HEK293 (cell line): ENCODE measurements at regions of chr6 and their contacts with region 1.

Region 1: GRCh38 chr6:139375232-139376016 is 976 bp upstream of the CITED2 start:
- H3K4me3 ChIP-seq: peak overlapping the region; percentile 79
- H3K27ac ChIP-seq: peak overlapping the region; percentile 94
- H3K4me1 ChIP-seq: peaks cover 16% of the 10 kb centered on the region
- CTCF ChIP-seq: 0 out of 2 replicates have a peak, but pooled peaks have one; percentile 40

Region 2: GRCh38 chr6:139219271-139219729 is 156.1 kb before region 1 on chr6:
- CTCF ChIA-PET with region 1: no interaction called
- POLR2A ChIA-PET with region 1: interaction called, 11 read pairs
- H3K4me3 ChIP-seq: no peak overlapping the region
- H3K27ac ChIP-seq: no peak overlapping the region
- H3K4me1 ChIP-seq: no peaks in the 10 kb centered on the region
- CTCF ChIP-seq: peak; percentile 88

Region 3: DNA sequence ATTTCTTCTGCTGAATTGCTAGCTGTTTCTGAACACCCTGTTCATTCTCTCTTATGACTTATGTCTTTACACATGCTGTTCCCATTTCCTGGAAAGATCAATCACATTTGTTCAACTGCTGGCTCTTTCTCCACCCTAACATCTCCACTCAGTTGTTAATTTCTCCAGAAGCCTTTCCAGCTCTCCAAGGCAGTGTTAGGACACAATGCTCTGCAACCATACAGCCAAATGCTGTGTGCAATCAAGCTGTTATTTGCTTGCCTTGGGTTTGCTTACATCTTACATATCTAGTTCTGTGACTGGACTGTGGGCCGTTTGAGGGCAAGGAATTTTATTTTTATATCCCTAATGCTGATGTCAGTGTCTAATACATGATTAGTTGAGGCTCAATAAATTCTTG is 23.2 kb after region 1 on chr6:
- CTCF ChIA-PET with region 1: interaction called, 4 read pairs
- POLR2A ChIA-PET with region 1: interaction called, 16 read pairs
- H3K4me3 ChIP-seq: no peak overlapping the region
- H3K27ac ChIP-seq: no peak overlapping the region
- H3K4me1 ChIP-seq: no peaks in the 10 kb centered on the region
- CTCF ChIP-seq: no peak

Region 4: GRCh38 chr6:139480356-139480833 is 105.0 kb after region 1 on chr6:
- CTCF ChIA-PET with region 1: no interaction called
- POLR2A ChIA-PET with region 1: interaction called, 12 read pairs
- H3K4me3 ChIP-seq: no peak overlapping the region
- H3K27ac ChIP-seq: no peak overlapping the region
- H3K4me1 ChIP-seq: peaks cover 3% of the 10 kb centered on the region; the same call in 1 of the 2 replicates
- CTCF ChIP-seq: no peak

Region 5: DNA sequence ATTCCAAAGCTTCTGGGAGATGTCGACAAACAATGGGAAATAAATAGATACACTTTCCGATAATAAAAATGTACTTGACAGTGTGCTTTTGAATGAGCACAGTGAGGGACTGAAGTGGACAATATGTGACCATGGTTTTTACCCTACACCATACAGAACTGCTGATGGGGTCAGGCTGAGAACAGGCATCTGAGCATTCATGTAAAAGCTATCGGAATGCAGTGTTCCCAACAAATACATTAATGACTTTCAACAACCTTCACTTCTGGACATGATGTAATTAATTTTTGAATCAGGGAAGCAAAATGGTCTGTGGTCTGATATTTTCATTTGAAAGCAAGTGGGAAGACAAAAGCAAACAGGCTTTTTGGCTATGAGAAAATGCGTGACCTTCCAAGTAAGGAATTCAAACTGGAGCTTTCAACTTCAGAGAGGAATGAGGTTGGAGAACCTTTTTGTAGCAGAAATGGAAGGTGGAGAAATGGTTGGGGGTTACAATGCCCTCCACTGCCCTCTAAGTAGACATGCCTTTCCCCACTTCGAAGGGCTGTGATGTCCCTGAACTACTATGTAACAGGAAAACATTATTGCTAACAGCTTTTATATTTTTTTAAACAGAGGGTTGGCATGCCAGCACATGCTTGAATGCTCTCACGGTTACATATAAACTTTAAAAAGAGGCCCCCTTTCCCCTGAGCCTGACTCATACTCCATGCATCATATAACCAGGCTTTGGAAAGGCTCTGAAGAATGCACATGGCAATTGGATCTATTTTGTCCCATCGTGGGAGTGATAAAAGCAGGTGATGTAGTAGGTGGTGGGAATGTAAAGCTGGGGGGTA is 202.6 kb after region 1 on chr6:
- CTCF ChIA-PET with region 1: no interaction called
- POLR2A ChIA-PET with region 1: interaction called, 15 read pairs
- H3K4me3 ChIP-seq: no peak overlapping the region
- H3K27ac ChIP-seq: no peak overlapping the region
- H3K4me1 ChIP-seq: no peaks in the 10 kb centered on the region
- CTCF ChIP-seq: no peak

Region 6: DNA sequence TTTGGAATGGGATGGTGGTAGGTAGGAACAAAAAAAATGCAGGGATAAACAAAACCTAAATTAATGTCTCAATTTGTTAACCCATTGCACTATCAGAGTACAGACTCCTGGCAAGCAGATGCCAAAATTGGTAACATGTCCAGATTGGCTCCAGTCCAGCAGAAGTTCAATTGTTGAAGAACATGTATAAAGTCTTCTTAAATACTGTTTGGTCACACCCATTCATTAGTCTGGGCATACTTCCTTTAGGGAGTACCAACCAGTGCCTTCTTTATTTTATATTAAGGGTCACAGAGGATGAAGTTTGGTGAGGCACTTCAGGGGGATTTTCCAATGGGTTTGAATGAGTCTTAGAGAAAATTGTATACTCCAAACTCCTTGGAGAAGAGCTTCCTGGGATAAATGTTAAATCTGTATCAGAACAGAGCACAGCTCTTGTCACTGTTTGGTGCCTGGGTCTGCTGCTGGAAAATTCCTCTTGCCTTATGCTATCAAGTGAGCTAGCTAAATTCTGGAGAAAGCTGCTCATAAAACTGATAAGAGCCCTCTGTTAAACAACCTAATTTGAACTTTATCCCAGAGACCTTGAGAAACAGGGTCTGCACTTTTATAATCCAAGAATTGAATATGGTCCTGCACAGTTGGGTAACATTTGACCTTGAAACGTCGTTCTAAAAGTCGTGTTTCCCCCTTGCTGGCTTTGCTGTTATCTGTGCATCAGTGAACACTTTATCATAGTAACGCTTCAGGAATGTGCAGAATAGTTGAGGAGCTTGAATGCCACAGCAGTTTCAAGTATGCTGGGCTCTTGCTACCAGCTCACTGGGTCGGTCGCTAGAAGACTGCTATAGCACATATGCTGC is 333.1 kb after region 1 on chr6:
- CTCF ChIA-PET with region 1: interaction called, 4 read pairs
- POLR2A ChIA-PET with region 1: interaction called, 49 read pairs
- H3K4me3 ChIP-seq: no peak overlapping the region
- H3K27ac ChIP-seq: no peak overlapping the region
- H3K4me1 ChIP-seq: peaks cover 6% of the 10 kb centered on the region; the same call in 1 of the 2 replicates
- CTCF ChIP-seq: no peak

Region 7: DNA sequence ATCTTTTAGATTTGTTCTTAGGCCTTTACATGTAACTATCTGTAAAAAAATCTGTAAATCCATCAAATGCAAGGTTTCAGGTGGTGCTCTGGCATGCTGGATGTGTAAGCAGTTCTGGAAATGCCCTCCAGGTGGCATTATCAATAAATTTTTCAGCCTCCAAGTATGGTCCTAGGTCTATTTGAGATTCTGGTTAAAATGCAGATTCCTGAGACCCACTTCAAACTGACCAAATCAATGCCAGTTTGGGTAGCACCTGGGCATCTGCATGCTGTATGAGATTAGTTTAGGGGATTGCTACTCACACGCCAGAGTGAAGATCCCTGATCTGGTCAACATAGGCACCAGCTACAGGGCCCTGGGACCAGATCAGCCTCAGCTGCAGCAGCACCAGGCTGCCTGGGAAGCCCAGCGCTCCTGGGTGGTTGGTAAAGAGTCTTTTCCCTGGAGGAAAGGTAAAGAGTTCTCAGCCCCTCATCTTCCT is 506.3 kb after region 1 on chr6:
- CTCF ChIA-PET with region 1: interaction called, 4 read pairs
- POLR2A ChIA-PET with region 1: interaction called, 26 read pairs
- H3K4me3 ChIP-seq: no peak overlapping the region
- H3K27ac ChIP-seq: no peak overlapping the region
- H3K4me1 ChIP-seq: peaks cover 7% of the 10 kb centered on the region
- CTCF ChIP-seq: no peak